Breast epithelium (tissue), 4 donors: ENCODE measurements at regions of chr2 and their contacts with region 1.

Region 1: DNA sequence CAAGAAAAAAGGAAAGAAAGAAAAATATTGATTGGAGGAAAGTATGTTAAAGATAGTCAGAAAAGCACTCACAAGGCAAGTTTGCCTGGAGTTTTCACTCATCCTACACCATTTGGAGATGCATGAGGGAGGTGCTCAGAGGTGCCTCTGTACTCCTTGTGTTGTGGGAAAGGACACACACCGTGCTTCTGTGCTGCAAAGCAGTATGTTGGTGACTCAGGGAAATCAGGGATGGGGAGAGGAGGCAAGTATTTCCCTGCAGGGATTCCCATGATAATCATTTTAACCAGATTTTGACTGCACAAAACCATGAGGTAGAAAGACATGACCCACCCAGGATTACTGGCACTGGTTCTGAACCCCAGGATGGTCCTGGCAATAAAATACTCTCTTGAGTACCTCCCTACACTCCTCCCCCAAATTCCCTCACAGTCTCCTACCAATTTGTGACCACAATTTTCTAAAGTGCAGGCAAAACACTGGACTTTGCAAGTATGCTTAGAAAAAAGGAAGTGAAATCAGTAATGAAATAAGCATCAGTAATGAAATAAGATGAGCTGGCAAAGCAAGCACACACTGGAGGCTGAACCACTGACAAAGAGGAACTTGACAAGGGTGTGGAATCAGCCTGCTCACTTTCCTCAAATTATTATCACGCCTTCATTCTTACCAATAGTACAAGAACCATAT is 155.5 kb upstream of the ACVR2A start:
- DNase-seq: no peak
- H3K4me3 ChIP-seq: no peak overlapping the region
- H3K27ac ChIP-seq: no peak overlapping the region
- H3K4me1 ChIP-seq: no peaks in the 10 kb centered on the region
- H3K27me3 ChIP-seq: no peaks in the 10 kb centered on the region
- CTCF ChIP-seq: no peak
- POLR2A ChIP-seq: no peak

Region 2: GRCh38 chr2:147482111-147482895 is 207.1 kb before region 1 on chr2:
- intact Hi-C with region 1: no loop called
- DNase-seq: no peak
- H3K4me3 ChIP-seq: no peak overlapping the region
- H3K27ac ChIP-seq: no peak overlapping the region
- H3K4me1 ChIP-seq: no peaks in the 10 kb centered on the region
- H3K27me3 ChIP-seq: no peaks in the 10 kb centered on the region
- CTCF ChIP-seq: no peak
- POLR2A ChIP-seq: no peak

Region 3: GRCh38 chr2:147703171-147703570 is 13.8 kb after region 1 on chr2:
- intact Hi-C with region 1: loop called (anchors 1 kb)
- DNase-seq: no peak
- H3K4me3 ChIP-seq: no peak overlapping the region
- H3K27ac ChIP-seq: no peak overlapping the region
- H3K4me1 ChIP-seq: no peaks in the 10 kb centered on the region
- H3K27me3 ChIP-seq: no peaks in the 10 kb centered on the region
- CTCF ChIP-seq: no peak
- POLR2A ChIP-seq: no peak

Region 4: DNA sequence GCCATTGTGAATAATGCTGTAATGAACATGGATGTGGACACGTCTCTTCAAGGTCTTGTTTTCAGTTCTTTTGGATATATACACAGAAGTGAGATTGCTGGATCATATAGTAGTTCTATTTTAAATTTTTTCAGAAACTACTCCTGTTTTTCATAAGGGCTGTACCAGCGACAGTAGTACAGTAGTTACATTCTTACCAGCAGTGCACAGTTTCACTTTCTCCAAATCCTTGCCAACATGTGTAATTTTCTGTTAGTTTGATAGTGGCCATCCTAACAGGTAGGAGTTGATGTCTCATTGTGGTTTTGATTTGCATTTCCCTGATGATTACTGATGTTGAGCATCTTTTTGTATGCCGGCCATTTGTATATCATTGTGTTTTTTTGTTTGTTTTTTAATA is 1036.9 kb after region 1 on chr2:
- intact Hi-C with region 1: no loop called
- DNase-seq: no peak
- H3K4me3 ChIP-seq: no peak overlapping the region
- H3K27ac ChIP-seq: no peak overlapping the region
- H3K4me1 ChIP-seq: no peaks in the 10 kb centered on the region
- H3K27me3 ChIP-seq: no peaks in the 10 kb centered on the region
- CTCF ChIP-seq: no peak
- POLR2A ChIP-seq: no peak